H1 (cell line): ENCODE measurements at regions of chr1 and their contacts with region 1.

Region 1: GRCh38 chr1:207963427-207964194 is 52.7 kb upstream of the CD34 start:
- DNase-seq: peak in 1 of 2 experiments; percentile 94
- H3K4me3 ChIP-seq: peak overlapping the region; percentile 30 to 64 (median 53)
- H3K27ac ChIP-seq: no peak overlapping the region; the same call in 1 of the 2 replicates
- H3K4me1 ChIP-seq: peaks cover 0 to 17% (median 5%) of the 10 kb centered on the region in 4 experiments; a peak in 6 of 7 replicates
- H3K27me3 ChIP-seq: peaks cover 19 to 60% (median 41%) of the 10 kb centered on the region in 4 experiments
- CTCF ChIP-seq: peak; percentile 94 to 98 (median 95)
- EP300 ChIP-seq: no peak
- POLR2A ChIP-seq: peak in 1 of 2 experiments; percentile 93; a peak in 2 of 3 replicates
- RAD21 ChIP-seq: peak; percentile 94 to 98

Region 2: DNA sequence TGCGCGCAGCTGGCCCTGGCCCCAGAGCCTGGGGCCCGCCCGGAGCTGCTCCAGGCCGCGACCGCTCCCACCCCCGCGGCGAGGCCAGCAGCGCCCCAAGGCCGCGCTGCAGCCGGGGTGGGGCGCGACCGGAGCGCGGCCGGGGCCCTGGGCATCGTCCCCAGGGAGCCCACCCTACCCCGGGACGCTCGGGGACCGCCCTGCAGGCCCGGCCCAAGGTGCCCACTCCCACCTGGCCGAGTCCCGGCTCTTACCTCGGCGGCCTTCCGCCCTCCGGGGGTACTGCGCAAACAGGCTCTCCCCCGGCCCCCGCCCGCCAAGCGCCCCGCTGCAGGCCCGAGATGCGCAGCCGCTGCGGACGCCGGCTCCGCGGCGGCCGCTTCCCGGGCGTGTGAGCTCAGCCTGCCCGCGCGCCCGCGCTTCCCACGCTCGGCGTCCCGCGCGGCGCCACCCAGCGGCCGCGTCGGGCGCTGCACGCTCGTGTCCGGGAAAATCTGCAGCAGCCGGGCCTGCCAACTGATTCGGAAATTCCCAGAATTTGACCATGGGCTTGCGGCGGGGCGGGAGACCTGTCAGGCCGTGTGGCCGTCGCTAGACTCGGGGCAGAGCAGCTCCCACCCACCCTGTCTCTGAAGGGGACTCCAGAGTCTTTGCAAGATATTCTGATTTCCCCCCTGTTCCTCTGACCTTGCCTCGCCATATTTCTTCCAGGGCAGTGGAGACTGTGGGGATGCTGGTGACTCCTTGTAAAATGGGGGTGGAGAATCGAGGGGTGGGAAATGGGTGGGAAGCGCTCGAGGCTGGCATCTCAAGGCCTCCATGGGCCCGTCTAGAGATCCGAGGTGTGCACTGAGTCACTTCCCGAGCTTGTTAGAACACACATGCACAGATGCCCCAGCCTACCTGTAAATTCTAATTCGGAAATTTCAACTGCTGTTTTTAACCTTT is 94.6 kb before region 1 on chr1:
- CTCF ChIA-PET with region 1: interaction called, 21 read pairs
- POLR2A ChIA-PET with region 1: interaction called, 3 read pairs
- DNase-seq: peak; percentile 29 to 90
- H3K4me3 ChIP-seq: peak overlapping the region; percentile 34 to 68 (median 50)
- H3K27ac ChIP-seq: no peak overlapping the region
- H3K4me1 ChIP-seq: peaks cover 0 to 8% (median 5%) of the 10 kb centered on the region in 4 experiments; a peak in 6 of 7 replicates
- H3K27me3 ChIP-seq: peaks cover 0 to 23% (median 8%) of the 10 kb centered on the region in 4 experiments; a peak in 6 of 7 replicates
- CTCF ChIP-seq: peak; percentile 69 to 82 (median 72)
- EP300 ChIP-seq: peak in 1 of 2 experiments; percentile 81; a peak in 1 of 3 replicates
- POLR2A ChIP-seq: no peak
- RAD21 ChIP-seq: peak; percentile 25 to 61

Region 3: DNA sequence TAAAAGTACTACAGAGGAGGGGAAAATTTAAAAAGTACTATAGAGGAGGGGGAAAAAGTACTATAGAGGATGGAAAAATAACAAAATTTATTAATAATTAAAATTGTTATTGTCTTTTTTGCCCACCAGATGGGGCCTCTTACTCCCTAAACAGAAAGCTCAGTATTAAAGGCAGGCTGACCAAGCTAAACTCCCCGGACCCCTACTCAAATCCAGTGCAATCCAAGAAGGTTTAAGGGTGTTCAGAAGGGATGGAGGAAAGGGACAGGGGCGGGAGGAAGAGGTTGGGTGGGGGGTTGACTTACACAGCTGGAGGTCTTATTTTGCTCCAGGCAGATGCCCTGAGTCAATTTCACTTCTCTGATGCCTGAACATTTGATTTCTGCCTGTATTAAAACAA is 66.4 kb before region 1 on chr1:
- CTCF ChIA-PET with region 1: interaction called, 69 read pairs
- POLR2A ChIA-PET with region 1: interaction called, 5 read pairs
- DNase-seq: no peak
- H3K4me3 ChIP-seq: no peak overlapping the region
- H3K27ac ChIP-seq: no peak overlapping the region
- H3K4me1 ChIP-seq: no peaks in the 10 kb centered on the region
- H3K27me3 ChIP-seq: 0 out of 7 replicates have a peak, but pooled peaks cover 0 to 2% (median 0%) of the 10 kb centered on the region in 4 experiments
- CTCF ChIP-seq: peak in 1 of 3 experiments; percentile 29; a peak in 1 of 4 replicates
- EP300 ChIP-seq: no peak
- POLR2A ChIP-seq: no peak
- RAD21 ChIP-seq: peak; percentile 39 to 51

Region 4: GRCh38 chr1:207938016-207938415 is 25.6 kb before region 1 on chr1:
- CTCF ChIA-PET with region 1: interaction called, 12 read pairs
- POLR2A ChIA-PET with region 1: interaction called, 3 read pairs
- DNase-seq: no peak
- H3K4me3 ChIP-seq: no peak overlapping the region
- H3K27ac ChIP-seq: no peak overlapping the region
- H3K4me1 ChIP-seq: no peaks in the 10 kb centered on the region
- H3K27me3 ChIP-seq: no peaks in the 10 kb centered on the region
- CTCF ChIP-seq: no peak
- EP300 ChIP-seq: no peak
- POLR2A ChIP-seq: no peak
- RAD21 ChIP-seq: no peak

Region 5: GRCh38 chr1:207973898-207974568 is 10.4 kb after region 1 on chr1:
- CTCF ChIA-PET with region 1: interaction called, 12 read pairs
- POLR2A ChIA-PET with region 1: no interaction called
- DNase-seq: no peak
- H3K4me3 ChIP-seq: no peak overlapping the region
- H3K27ac ChIP-seq: no peak overlapping the region
- H3K4me1 ChIP-seq: no peaks in the 10 kb centered on the region
- H3K27me3 ChIP-seq: no peaks in the 10 kb centered on the region
- CTCF ChIP-seq: no peak
- EP300 ChIP-seq: no peak
- POLR2A ChIP-seq: no peak
- RAD21 ChIP-seq: no peak

Region 6: DNA sequence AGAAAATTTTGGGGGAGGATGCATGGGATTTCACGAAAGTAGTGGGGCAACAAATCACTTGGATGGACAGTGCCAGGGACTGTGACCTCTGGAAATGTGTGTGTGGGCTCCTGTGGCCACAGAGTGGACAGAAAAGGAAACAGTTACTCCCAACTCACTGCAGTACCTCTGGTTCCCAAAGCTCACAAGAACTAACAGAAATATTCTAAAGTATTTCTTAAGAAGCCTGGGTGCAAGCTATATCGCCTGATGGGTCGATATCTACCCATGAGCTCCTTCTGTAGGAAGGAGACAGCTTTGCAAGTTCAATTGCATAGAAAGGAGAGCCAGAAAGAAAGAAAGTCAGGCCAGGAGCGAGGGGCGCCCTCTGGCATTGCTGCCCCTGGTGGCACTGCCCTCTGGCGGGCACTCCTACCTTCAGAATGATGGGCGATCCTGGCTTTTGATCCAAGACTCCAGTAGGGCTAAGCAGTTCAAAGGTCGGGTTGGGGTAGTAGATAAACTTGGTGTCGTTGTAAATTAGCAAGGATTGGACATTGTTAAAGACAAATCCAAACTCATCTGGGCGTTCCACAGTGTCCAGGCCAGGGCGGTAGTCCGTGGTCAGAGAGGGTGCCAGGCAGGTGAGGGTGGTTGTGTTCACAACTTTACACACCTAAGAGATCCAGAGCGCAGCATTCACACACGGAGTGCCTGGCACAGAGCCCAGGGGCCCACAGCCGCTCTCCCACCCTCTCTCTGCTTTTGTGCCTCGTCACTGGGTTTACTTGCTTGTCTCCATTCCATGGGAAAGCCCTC is 82.1 kb after region 1 on chr1:
- CTCF ChIA-PET with region 1: no interaction called
- POLR2A ChIA-PET with region 1: no interaction called
- DNase-seq: no peak
- H3K4me3 ChIP-seq: no peak overlapping the region
- H3K27ac ChIP-seq: no peak overlapping the region
- H3K4me1 ChIP-seq: peaks cover 0 to 5% (median 0%) of the 10 kb centered on the region in 4 experiments; a peak in 1 of 7 replicates
- H3K27me3 ChIP-seq: no peaks in the 10 kb centered on the region
- CTCF ChIP-seq: peak; percentile 41 to 58 (median 46)
- EP300 ChIP-seq: no peak
- POLR2A ChIP-seq: no peak
- RAD21 ChIP-seq: peak; percentile 3 to 22; a peak in 1 of 4 replicates